ENCODE measurements at regions of chr4 and their contacts with region 1.

Region 1: DNA sequence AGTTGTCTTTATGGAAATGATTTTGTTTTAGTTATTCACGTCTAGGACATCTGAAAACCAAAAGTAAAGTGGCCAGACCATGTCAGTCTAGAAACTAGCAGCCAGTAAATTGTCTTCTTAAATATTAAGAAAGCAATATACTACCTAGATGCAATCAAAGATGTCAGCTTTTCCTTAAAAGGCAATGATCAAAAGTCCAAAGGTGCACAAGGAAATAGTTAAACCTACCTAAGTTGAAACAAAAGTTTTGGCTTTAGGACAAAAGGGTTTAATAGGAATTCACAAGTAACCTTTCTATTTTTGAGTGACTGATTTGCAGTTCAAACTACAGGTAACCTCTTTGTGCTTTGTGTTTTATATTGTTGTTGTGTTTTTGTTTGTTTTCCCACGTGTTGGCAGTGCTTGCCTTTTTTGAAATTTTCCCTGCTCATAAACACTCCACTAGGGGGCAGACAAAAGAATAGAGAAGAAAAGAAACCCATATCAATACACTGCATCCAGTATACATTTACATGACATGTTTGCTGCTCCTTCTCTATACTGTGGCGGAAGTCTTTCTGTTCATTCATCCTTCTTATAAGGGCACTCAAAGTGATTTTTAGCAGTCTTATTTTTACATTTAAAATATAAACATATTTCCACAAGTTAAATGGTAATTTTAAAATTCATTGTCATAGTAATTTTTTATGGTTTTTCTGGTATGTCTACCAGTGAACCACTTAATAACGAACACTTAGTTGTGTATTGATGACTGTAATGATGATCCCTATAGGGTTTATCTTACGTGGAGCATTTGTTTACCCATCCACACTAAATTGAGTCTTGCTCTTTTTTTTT is 62.7 kb downstream of the GAB1 start:
- DNase-seq: peak; percentile 17 to 40 (median 21)
- H3K4me3 ChIP-seq: no peak overlapping the region
- H3K4me3 Mint-ChIP-seq: no peak overlapping the region
- H3K27ac ChIP-seq: no peak overlapping the region
- H3K27ac Mint-ChIP-seq: no peak overlapping the region
- H3K4me1 ChIP-seq: peaks cover 9 to 13% of the 10 kb centered on the region in 2 donors
- H3K4me1 Mint-ChIP-seq: peaks cover 15% of the 10 kb centered on the region
- H3K27me3 ChIP-seq: no peaks in the 10 kb centered on the region
- H3K27me3 Mint-ChIP-seq: peaks cover 0 to 3% (median 0%) of the 10 kb centered on the region in 3 donors
- CTCF ChIP-seq: peak; percentile 86

Region 2: DNA sequence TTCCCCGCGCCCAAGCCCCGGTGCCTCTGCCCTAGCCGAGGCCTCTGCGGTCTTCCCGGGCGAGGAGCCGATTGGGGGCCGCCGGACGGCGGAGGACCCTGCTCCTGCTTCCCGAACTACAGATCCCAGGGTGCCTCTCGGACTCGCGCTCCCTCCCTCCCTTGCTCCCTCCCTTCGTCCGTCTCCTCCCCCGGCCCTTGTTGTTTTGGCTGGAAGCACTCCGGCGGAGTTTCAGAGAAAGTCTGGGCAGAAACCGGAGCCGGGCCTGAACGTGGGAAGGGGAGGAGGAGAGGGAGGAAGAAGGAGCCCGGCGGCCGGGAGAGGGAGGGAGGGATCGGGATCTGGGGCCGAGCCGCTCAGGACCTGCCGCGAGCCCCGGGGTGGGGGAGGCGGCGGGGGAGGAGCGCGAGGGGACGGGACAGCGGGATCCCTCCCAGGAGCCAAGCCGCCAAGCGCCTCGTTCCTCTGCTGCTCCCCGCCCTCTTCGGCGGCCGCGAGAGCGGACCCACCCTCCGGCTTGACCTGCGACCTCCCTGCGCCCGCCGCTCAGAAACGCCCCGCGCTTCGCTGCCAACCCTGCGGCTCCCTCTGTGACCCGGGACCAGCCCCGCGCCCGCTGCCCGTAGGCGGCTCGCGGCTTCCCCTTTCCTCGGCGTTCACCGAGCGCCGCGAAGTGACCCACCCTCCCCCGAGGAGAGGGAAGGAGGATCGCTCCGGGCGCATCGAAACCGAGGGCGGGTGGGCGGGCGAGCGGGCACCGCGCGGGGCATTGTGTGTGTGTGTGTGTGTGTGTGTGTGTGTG is 63.2 kb before region 1 on chr4:
- intact Hi-C with region 1: loop called in 1 of 2 experiments (anchors 10 kb)
- DNase-seq: peak; percentile 65 to 78 (median 73)
- H3K4me3 ChIP-seq: peak overlapping the region; percentile 65 to 98 (median 93)
- H3K4me3 Mint-ChIP-seq: peak overlapping the region; percentile 99 to 100
- H3K27ac ChIP-seq: peak overlapping the region; percentile 86 to 91
- H3K27ac Mint-ChIP-seq: peak overlapping the region; percentile 71 to 93 (median 89)
- H3K4me1 ChIP-seq: peaks cover 27 to 35% of the 10 kb centered on the region in 2 donors
- H3K4me1 Mint-ChIP-seq: peaks cover 37% of the 10 kb centered on the region
- H3K27me3 ChIP-seq: no peaks in the 10 kb centered on the region
- H3K27me3 Mint-ChIP-seq: peaks cover 0 to 3% (median 2%) of the 10 kb centered on the region in 3 donors
- CTCF ChIP-seq: no peak